PC-3 (cell line): ENCODE measurements at regions of chr1 and their contacts with region 1.

Region 1: DNA sequence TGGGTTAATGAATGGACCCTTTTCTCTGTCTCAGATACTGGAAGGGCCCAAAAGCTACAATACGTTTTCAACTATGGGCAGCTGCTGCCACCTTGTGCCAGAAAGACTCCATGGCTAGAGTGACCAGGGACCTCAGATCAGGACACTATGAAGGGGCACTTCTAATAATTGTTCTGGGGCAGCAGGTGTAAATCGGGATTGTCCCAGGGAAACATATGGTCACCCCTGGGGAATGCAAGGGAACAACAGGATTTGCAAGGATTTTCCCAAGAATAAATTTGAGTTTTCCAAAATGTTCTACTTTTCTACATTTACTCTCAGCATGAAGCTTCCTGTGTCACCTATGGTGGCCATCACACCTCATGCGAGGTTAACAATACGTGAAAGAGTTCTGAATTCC is 12.0 kb upstream of the FCAMR start:
- DNase-seq: peak; percentile 92
- ATAC-seq: peak; percentile 95
- H3K4me3 ChIP-seq: no peak overlapping the region
- H3K27ac ChIP-seq: no peak overlapping the region
- H3K4me1 ChIP-seq: no peaks in the 10 kb centered on the region; the same call in 1 of the 2 replicates
- H3K27me3 ChIP-seq: no peaks in the 10 kb centered on the region
- CTCF ChIP-seq: peak; percentile 99

Region 2: GRCh38 chr1:206635080-206635977 is 346.9 kb before region 1 on chr1 and contains the start of gene DYRK3:
- CTCF ChIA-PET with region 1: interaction called, 4 read pairs
- POLR2A ChIA-PET with region 1: no interaction called
- intact Hi-C with region 1: loop called (anchors 2 kb)
- DNase-seq: peak; percentile 98
- ATAC-seq: peak; percentile 82
- H3K4me3 ChIP-seq: peak within 1 kb of the TSS; percentile 85
- H3K27ac ChIP-seq: peak within 1 kb of the TSS; percentile 54
- H3K4me1 ChIP-seq: peaks cover 21% of the 10 kb centered on the region
- H3K27me3 ChIP-seq: no peaks in the 10 kb centered on the region
- CTCF ChIP-seq: no peak
- total RNA-seq, gene DYRK3: 12.1 and 14.1 TPM in 2 replicates

Region 3: GRCh38 chr1:206808615-206809014 is 173.6 kb before region 1 on chr1:
- CTCF ChIA-PET with region 1: interaction called, 11 read pairs
- POLR2A ChIA-PET with region 1: no interaction called
- intact Hi-C with region 1: loop called (anchors 1 kb)
- DNase-seq: peak; percentile 72
- ATAC-seq: peak; percentile 72
- H3K4me3 ChIP-seq: no peak overlapping the region
- H3K27ac ChIP-seq: no peak overlapping the region
- H3K4me1 ChIP-seq: peaks cover 8% of the 10 kb centered on the region; the same call in 1 of the 2 replicates
- H3K27me3 ChIP-seq: peaks cover 13% of the 10 kb centered on the region
- CTCF ChIP-seq: peak; percentile 75

Region 4: GRCh38 chr1:206935491-206936067 is 46.6 kb before region 1 on chr1:
- CTCF ChIA-PET with region 1: interaction called, 4 read pairs
- POLR2A ChIA-PET with region 1: no interaction called
- intact Hi-C with region 1: loop called (anchors 1 kb)
- DNase-seq: peak; percentile 62
- ATAC-seq: peak; percentile 82
- H3K4me3 ChIP-seq: no peak overlapping the region
- H3K27ac ChIP-seq: no peak overlapping the region
- H3K4me1 ChIP-seq: no peaks in the 10 kb centered on the region
- H3K27me3 ChIP-seq: no peaks in the 10 kb centered on the region
- CTCF ChIP-seq: peak; percentile 88

Region 5: DNA sequence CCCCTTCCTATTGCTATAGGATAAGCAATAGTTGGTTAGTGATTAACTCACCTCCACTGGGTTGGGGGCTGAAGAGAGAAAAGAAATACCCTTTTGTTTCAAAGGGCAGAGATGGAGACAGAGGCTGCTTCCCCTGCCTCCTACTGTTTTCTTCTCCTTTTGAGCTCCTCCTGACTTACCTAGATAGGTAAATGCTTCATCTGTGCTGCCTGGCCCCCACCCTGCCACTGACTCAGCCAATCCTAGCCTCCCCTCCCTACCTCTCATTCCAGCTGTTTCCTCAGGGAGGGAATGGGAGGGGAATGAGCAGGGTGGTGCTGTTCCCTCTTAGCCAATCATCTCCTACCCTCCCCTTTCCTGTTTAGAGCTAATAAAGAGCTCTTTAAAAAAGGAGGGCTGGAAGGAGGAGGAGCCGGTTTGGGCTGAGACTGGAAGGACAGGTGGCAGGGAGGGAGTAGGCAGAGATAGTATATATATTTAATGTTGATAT is 50.4 kb after region 1 on chr1 and contains the start of gene C1orf116:
- CTCF ChIA-PET with region 1: interaction called, 11 read pairs
- POLR2A ChIA-PET with region 1: interaction called, 5 read pairs
- intact Hi-C with region 1: loop called (anchors 1 kb)
- DNase-seq: peak; percentile 99
- ATAC-seq: peak; percentile 63
- H3K4me3 ChIP-seq: peak within 1 kb of the TSS; percentile 69
- H3K27ac ChIP-seq: peak within 1 kb of the TSS; percentile 95
- H3K4me1 ChIP-seq: peaks cover 88% of the 10 kb centered on the region
- H3K27me3 ChIP-seq: no peaks in the 10 kb centered on the region
- CTCF ChIP-seq: no peak
- total RNA-seq, gene C1orf116: 34.9 and 36.2 TPM in 2 replicates

Region 6: GRCh38 chr1:207097871-207098324 is 115.7 kb after region 1 on chr1:
- CTCF ChIA-PET with region 1: no interaction called
- POLR2A ChIA-PET with region 1: no interaction called
- intact Hi-C with region 1: no loop called
- DNase-seq: peak; percentile 89
- ATAC-seq: peak; percentile 93
- H3K4me3 ChIP-seq: no peak overlapping the region
- H3K27ac ChIP-seq: no peak overlapping the region
- H3K4me1 ChIP-seq: peaks cover 9% of the 10 kb centered on the region
- H3K27me3 ChIP-seq: peaks cover 12% of the 10 kb centered on the region
- CTCF ChIP-seq: no peak

Region 7: DNA sequence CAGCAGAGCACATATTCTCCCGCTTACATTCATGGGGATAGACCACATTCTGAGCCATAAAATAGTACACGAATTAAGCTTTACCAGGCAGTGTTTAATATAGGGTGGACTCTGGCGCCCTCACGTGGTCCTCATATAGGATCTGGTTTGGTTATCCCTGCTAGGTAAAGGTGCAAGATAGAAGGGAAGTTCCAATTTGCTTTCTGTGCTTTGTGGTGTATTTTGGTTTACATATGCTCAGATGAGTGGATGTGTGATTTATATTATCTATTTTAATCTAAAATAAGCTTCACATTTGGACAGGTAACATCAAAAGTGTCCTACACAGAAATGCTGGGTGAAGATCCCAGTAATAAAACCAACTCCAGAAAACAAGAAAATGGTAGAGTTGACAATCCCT is 517.4 kb after region 1 on chr1:
- CTCF ChIA-PET with region 1: no interaction called
- POLR2A ChIA-PET with region 1: no interaction called
- intact Hi-C with region 1: loop called (anchors 1 kb)
- DNase-seq: peak; percentile 90
- ATAC-seq: peak; percentile 99
- H3K4me3 ChIP-seq: no peak overlapping the region
- H3K27ac ChIP-seq: no peak overlapping the region
- H3K4me1 ChIP-seq: no peaks in the 10 kb centered on the region
- H3K27me3 ChIP-seq: peaks cover 80% of the 10 kb centered on the region
- CTCF ChIP-seq: peak; percentile 99